AG04449 (cell line): ENCODE measurements at regions of chr15 and their contacts with region 1.

Region 1: DNA sequence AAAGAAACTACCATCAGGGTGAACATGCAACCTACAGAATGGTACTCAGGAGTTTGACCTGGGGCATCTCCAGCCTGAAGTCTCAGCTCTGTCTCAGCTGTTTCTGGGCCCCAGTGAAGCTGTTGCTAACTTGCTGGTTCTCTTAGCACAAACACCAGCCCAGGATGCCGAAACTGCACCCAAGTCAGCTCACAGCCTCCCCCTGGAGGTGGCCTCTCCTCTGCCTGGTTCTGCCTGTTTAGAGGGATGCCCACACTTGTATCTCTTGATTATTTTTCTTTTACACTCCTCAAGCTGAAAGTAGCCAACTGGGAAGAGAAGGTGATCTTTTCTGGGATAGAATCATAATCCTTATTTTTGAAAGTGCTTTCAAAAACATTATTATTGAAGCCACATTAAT is 289.0 kb upstream of the RASGRP1 start:
- DNase-seq: no peak
- H3K4me3 ChIP-seq: no peak overlapping the region
- CTCF ChIP-seq: peak; percentile 64

Region 2: DNA sequence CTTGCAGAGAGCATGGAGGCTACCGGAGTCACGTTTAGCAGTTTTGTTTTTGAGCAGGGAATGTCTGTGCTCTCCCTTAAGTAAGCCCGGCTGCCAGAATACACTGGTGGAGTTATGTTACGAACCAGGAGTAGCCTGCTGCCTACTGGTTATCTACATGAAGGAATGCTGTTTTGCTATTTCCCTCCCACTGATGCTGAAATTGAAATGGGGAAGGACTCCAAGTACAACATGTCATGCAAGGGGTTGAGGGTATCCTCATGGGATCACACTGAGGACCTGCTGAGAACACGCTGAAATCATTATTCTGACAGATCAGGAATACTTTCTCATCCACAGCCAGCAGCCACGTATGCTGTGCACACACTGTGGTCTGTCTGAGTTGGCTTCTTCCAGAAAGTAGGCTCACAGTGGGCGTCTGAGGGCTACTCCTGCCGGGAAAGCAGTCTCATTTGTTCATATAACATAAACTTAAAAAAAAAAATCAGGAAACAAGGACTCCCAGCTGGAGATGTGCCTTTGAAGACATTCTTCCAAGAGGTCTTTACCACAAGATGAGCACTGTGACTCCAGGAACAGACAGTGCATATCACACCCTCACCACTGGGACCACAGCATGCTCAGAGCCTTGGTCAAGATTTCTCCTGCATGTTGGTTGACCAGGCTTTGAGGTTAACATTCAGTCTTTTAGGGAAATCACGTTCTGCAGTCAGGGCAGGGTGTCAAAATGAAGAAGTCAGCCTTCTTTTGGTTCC is 11.4 kb after region 1 on chr15:
- CTCF ChIA-PET with region 1: interaction called, 18 read pairs
- POLR2A ChIA-PET with region 1: no interaction called
- DNase-seq: peak; percentile 99
- H3K4me3 ChIP-seq: no peak overlapping the region
- CTCF ChIP-seq: peak; percentile 27